A673 (cell line): ENCODE measurements at regions of chr13 and their contacts with region 1.

Region 1: GRCh38 chr13:75870397-75870903 is 234.3 kb downstream of the LMO7 start:
- DNase-seq: peak; percentile 39
- H3K4me3 ChIP-seq: no peak overlapping the region
- H3K27ac ChIP-seq: no peak overlapping the region
- H3K4me1 ChIP-seq: no peaks in the 10 kb centered on the region
- H3K27me3 ChIP-seq: peaks cover 13% of the 10 kb centered on the region
- CTCF ChIP-seq: peak; percentile 84

Region 2: DNA sequence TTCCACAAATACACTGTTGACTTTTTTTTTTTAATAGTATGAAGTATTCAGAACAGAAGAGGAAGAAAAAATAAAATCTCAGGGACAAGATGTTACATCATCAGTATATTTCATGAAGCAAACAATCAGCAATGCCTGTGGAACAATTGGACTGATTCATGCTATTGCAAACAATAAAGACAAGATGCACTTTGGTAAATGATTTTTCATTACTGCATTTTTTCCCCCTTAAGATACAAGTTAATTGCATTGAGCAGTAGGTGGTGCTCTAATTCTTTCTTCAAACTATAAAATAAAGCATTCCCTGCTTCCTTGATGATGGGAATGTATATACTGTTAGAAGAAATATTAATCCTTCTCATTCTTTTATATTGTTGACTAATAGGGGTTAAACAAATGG is 303.8 kb before region 1 on chr13:
- CTCF ChIA-PET with region 1: no interaction called
- POLR2A ChIA-PET with region 1: no interaction called
- intact Hi-C with region 1: loop called (anchors 5 kb)
- DNase-seq: peak; percentile 46
- H3K4me3 ChIP-seq: no peak overlapping the region
- H3K27ac ChIP-seq: no peak overlapping the region
- H3K4me1 ChIP-seq: no peaks in the 10 kb centered on the region
- H3K27me3 ChIP-seq: no peaks in the 10 kb centered on the region
- CTCF ChIP-seq: peak; percentile 54

Region 3: GRCh38 chr13:75694722-75695121 is 175.7 kb before region 1 on chr13:
- CTCF ChIA-PET with region 1: interaction called, 7 read pairs
- POLR2A ChIA-PET with region 1: no interaction called
- intact Hi-C with region 1: loop called (anchors 2 kb)
- DNase-seq: no peak
- H3K4me3 ChIP-seq: no peak overlapping the region
- H3K27ac ChIP-seq: no peak overlapping the region
- H3K4me1 ChIP-seq: no peaks in the 10 kb centered on the region
- H3K27me3 ChIP-seq: no peaks in the 10 kb centered on the region
- CTCF ChIP-seq: no peak

Region 4: DNA sequence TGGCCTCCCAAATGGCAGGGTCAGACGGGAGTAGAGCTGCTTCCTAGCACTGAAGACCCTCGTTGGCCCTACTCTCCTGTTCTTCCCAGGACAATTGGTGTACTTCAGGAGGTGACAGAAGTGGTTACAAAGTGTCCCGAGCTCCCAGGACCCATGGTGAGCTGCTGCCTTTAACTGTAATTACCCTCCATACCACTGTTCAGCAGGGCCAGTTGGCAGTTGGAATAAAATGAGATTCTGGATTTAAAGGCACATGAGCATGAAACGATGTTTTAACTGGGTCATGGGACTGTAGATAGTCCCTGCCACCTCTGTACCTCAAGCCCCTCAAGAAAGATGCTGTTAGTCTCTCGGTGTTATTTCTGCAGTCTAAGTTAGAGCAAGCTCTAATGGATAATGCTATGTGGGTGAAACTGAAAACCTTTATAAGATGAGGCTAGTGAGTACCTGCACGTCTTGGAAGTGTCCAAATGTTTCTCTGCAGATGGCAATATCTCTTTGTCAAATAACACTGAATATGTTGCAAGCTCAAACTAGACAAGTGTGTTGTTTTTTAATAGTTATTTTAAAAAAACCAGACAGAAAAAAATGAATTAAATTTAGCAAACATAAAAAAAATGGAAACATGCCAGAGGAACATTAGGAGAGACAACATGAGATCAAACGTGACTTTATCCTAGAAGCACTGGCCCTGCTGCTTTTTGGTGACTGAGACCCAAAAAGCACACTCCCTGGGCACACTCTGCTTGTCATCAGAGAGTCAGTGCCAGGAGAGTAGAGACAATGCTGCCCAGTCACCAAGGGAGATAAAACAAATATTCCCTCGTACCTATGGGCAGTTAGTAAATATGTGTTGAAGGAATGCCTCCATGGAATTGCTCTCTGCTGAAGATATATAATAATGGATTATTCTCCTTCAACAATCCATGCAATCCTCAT is 32.0 kb after region 1 on chr13:
- CTCF ChIA-PET with region 1: no interaction called
- POLR2A ChIA-PET with region 1: no interaction called
- intact Hi-C with region 1: no loop called
- DNase-seq: no peak
- H3K4me3 ChIP-seq: no peak overlapping the region
- H3K27ac ChIP-seq: no peak overlapping the region
- H3K4me1 ChIP-seq: no peaks in the 10 kb centered on the region
- H3K27me3 ChIP-seq: peaks cover 71% of the 10 kb centered on the region
- CTCF ChIP-seq: no peak

Region 5: DNA sequence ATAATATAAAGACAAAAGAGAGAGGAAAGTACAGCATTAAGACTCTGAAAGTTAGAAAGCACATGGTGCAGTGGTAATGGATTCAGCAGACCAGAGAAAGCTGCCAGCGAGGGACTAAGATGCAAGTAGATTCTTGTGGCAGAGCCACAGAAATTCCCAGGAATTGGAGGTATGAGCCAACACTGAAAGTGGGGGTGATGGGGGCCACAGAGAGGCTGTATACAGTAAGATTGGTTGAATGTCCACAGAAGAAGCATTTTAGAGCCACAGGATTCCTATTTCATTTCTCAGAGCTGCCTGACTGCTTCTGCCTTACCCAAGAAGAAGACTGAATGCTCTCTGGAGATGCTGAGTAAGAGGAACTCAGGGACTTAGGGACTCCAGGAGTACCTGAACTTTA is 60.7 kb after region 1 on chr13:
- CTCF ChIA-PET with region 1: no interaction called
- POLR2A ChIA-PET with region 1: no interaction called
- intact Hi-C with region 1: no loop called
- DNase-seq: no peak
- H3K4me3 ChIP-seq: no peak overlapping the region
- H3K27ac ChIP-seq: no peak overlapping the region
- H3K4me1 ChIP-seq: no peaks in the 10 kb centered on the region
- H3K27me3 ChIP-seq: peaks cover 32% of the 10 kb centered on the region
- CTCF ChIP-seq: no peak

Region 6: DNA sequence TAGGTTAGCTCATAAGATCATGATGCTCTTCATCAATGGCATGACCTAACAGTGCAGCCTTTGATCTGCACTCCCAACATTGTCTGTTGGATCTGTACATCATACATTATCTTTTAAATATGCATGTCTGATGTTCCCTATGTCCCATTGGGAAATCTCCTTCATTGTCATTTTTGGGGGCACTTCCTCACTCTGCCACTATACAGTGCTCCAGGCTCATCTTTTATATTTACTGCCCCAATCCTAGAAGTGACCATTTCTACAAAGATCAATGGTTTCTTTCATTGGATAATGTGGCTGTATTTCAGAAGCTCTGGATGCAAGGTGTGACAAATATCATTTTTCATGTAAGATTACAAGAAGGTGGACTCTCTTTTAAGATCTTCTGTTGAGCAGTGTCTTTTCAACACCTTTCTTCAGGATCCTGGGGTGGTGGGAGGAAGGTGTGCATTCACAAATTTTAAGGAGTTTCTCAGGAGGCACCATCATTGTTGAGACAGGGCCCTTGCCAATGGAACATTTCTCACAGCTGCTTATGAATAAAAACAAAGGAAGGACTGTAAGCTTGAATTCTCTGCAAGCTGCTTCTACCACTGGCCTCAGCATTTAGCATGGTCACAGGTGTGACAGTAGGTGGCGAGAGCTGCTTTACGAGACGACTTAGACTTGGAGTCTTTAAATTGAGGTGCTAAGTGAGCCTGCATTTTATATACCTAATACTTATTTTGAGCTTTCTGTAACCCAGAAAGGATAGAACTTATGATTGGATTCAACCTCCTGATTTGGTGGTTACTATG is 168.7 kb after region 1 on chr13:
- CTCF ChIA-PET with region 1: no interaction called
- POLR2A ChIA-PET with region 1: no interaction called
- intact Hi-C with region 1: no loop called
- DNase-seq: no peak
- H3K4me3 ChIP-seq: no peak overlapping the region
- H3K27ac ChIP-seq: no peak overlapping the region
- H3K4me1 ChIP-seq: no peaks in the 10 kb centered on the region
- H3K27me3 ChIP-seq: peaks cover 2% of the 10 kb centered on the region
- CTCF ChIP-seq: no peak

Region 7: DNA sequence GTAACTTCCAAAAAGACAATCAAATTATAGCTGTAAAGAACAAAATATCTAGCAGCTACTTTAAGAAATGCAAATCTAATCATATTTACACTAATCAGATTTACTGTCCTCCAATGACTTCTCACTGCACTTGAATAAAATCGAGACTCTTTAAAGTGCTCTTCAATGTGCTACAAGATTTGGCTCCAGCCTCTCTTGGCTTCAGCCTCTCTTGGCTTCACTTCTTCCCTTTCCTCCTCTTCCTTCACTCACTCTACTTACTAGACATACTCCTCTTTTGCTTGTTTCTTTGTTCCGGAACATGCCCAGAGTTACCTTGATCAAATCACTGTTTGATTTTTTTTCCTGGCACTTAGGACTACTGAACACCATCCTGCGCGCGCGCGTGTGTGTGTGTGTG is 261.1 kb after region 1 on chr13:
- CTCF ChIA-PET with region 1: no interaction called
- POLR2A ChIA-PET with region 1: no interaction called
- intact Hi-C with region 1: no loop called
- DNase-seq: no peak
- H3K4me3 ChIP-seq: no peak overlapping the region
- H3K27ac ChIP-seq: no peak overlapping the region
- H3K4me1 ChIP-seq: no peaks in the 10 kb centered on the region
- H3K27me3 ChIP-seq: no peaks in the 10 kb centered on the region
- CTCF ChIP-seq: no peak